Head of caudate nucleus (tissue), 42 donors: ENCODE measurements at regions of chr13 and their contacts with region 1.

Region 1: DNA sequence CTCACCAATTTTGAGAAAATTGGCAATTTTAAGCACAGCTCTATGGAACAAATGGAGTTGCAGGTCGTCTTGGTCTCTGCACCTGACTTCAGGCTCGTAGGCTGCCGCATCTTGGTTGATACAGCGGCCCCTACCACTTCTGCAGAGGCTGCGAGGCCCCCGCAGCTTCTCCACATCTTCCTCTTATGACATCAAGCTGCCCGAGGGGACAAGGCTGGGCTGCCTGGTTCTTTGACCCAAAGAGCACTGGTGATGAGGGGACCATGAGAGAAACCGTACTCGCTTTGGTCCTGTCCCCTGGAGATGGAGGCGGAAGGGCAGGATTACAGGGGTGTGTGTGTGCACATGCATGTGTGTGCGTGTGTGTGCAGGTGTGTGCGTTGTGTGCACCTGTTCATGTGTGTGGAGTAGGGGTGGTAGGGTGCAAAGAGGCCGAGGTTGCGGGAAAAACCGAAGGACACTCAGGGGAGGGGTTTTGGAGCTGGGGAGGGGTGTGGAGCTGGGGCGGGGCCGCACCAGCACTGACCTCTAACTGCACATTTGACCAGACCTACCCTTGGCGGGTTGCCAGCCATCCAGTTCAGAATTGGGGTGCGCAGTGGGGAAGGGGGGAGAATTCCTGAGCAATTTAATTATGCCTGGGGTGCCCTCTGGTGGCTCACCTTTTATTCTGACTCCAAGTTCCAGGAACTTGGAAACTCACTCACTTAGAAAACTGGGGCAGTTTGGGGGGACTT is 65.1 kb upstream of the ARHGEF7 start:
- DNase-seq: peak in 33 of 42 donors; percentile 25 to 79 (median 46)

Region 2: GRCh38 chr13:110925023-110925612 is 124.9 kb before region 1 on chr13:
- intact Hi-C with region 1: loop called (anchors 10 kb)
- DNase-seq: peak in 1 of 42 donors; percentile 16

Region 3: DNA sequence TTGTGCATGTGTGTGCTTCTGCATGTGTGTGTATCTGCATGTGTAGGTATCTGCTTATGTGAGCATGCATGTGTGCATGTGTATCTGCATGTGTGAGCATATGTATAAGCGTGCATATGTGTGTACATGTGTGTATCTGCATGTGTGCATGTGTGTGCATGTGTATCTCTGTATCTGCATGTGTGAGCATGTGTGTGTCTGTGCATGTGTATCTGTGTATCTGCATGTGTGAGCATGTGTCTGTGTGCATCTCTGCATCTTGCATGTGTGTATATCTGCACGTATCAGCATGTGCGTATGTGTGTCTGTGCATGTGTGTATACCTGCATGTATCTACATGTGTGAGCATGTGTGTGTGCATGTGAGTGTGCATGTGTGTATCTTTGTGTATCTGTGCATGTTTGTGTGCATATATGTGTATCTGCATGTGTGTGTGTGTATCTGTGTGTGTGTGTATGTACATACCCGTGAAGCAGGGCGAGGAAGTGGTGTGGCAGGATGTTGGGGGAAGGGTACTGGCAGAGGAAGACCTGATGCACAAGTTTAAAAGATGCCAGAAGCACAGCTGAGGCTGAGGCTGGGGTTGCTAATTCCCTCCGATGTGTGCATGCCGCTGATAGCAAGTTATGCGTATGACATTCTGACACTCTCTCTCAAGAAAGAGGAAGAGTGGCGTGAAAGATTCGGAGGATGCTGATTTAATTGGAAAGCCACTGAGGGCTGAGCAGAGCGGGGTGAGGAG is 334.6 kb after region 1 on chr13:
- intact Hi-C with region 1: no loop called
- DNase-seq: peak in 24 of 42 donors; percentile 8 to 65 (median 34)